ENCODE measurements at regions of chr19 and their contacts with region 1.

Region 1: GRCh38 chr19:36528194-36528920 is at the start of gene ZNF260:
- DNase-seq: peak; percentile 88

Region 2: DNA sequence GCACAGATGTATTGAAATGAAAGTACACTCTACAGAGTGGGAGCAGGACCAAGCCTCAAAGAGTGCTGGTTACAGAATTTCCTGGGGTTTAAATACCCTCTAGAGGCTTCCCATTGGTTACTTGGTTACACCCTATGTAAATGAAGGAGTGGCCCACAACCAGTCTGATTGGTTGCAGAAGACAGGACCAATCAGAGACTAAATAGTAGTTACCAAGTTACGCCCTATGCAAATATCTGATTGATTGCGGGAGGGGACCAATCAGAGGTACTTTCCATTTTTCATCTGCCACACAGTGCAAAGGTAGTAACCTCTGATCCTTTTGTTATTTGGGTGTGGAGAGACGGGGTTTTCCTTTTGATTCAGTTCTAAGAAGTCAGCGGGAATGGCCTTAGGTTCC is 104.4 kb before region 1 on chr19:
- CTCF ChIA-PET with region 1: no interaction called
- POLR2A ChIA-PET with region 1: no interaction called
- DNase-seq: no peak

Region 3: GRCh38 chr19:36573020-36573885 is 44.9 kb after region 1 on chr19 and contains the start of gene ZNF529:
- CTCF ChIA-PET with region 1: no interaction called
- POLR2A ChIA-PET with region 1: interaction called, 22 read pairs
- DNase-seq: peak; percentile 83

Region 4: DNA sequence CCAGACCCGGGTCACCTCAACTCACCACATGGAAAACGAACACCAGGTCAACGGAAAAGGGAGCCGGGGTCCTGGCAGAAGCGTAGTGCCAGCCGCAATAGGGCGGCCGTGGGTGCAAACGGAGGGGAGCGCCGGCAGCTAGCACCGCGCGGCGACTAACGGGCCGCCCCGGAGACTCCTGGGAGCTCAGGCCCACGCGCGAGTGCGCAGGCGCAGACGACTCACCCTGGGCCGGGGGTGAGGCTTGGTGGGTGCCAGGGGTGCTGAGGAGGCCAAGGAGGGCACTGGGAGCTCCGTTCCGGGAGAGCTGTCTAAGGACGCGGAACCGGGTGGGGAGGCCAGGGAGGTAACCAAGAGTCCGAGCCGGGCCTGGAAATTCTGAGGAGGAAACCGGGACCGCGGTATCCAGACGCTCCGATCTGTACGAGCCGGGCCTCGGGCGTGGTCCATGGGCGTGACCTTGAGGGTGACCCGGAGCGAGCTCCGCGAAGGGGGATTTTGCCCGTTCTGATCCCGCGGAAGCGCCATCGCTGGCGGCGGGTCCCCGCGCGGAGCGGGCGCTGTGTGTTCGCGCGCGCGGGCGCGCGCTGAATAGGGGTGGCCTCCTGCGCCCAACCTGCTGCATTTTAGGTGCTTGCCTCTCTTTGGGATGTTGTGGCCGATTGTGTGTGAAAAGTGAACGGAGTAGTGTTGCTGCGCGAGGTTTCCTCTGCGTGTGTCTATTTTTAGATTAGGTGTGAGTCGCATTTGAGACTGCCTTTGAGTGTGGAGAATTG is 76.9 kb after region 1 on chr19 and contains the start of gene ZNF382:
- CTCF ChIA-PET with region 1: no interaction called
- POLR2A ChIA-PET with region 1: interaction called, 11 read pairs
- DNase-seq: peak; percentile 86

Region 5: DNA sequence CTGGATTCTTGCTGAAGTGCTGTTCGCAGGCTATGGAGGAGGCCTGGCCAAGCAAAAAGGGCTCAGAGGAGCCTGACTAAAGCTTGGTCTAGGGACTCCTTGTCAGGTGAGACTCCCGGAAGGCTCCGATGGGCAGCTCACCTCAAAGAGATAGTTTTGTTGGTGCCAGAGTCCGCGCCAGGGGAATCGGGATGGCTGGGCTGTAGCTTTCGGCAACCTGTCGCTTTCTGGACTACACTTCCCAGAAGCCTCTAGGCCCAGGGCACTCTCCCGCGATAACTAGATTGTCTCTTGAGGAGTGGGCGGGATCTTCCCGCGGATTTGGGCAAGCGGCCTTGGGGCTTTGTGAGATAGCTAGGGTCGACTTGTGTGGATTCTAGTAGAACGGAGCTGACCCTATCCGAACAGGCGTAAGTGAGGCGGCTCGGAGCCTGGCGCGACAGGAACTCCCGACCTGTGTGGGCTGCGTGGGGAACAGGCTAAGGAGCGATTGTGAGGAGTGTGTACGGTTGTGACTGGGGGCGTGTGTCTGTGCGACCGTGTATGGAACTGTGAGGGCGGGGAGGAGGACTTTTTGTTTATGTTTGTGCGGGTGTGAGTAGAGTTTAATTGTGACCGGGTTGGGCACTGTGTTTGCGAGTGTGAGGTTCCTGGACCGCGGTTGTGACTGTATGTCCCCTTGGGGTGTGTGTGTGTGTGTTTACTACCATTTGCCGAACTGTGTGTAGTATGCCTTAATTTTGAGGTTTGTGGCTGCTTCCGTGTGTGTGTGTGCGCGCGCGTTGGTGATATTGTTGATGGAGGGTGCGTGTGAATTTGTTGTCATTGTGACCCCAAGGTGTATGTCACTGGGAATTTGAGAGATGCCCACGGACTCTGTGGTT is 322.4 kb after region 1 on chr19 and contains the start of gene ZNF345:
- CTCF ChIA-PET with region 1: no interaction called
- POLR2A ChIA-PET with region 1: interaction called, 12 read pairs
- DNase-seq: peak; percentile 88